WTC11 (cell line): ENCODE measurements at regions of chr21 and their contacts with region 1.

Region 1: DNA sequence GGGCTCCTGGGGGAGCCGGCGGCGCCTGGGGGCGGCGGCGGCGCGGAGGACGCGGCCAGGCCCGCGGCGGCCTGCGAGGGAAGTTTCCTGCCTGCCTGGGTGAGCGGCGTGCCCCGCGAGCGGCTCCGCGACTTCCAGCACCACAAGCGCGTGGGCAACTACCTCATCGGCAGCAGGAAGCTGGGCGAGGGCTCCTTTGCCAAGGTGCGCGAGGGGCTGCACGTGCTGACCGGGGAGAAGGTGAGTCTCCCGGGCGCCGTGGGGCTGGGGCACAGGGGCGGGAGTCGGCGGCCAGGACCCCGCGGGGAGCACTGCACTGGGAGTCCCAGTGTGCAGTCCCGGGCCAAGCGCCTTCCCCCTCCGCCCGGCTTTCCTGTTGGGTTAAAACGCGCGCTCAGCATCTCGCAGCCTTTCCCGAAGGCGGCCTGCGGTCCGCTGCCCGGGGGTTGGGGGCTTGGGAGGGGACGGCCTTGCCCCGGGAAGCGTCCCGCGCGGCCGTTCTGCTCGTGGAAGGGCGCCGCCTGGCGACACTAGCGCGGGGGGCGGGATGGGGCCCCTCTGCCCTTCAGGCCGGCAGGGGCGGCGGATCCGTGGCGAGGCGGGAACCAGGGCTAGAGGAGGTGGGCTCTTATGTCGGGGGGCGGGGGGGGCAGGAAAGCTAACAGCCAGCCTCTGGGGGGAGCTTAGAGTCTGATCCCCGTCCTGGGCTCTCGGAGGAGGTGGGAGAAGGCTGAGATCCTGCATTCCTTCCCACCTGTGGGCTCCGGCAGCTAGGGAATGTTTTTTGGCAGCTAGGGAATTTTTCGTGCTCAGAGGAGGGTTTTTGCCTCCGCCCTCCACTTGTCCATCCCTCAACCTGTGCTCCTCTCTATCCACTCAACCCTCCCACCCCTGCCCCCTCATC is 1.1 kb downstream of the HUNK start:
- DNase-seq: peak; percentile 74
- ATAC-seq: peak; percentile 18
- H3K4me3 Mint-ChIP-seq: peak overlapping the region; percentile 63
- H3K27ac Mint-ChIP-seq: no peak overlapping the region
- H3K4me1 Mint-ChIP-seq: peaks cover 44% of the 10 kb centered on the region
- H3K27me3 Mint-ChIP-seq: peaks cover 43% of the 10 kb centered on the region
- CTCF ChIP-seq: peak; percentile 65

Region 2: DNA sequence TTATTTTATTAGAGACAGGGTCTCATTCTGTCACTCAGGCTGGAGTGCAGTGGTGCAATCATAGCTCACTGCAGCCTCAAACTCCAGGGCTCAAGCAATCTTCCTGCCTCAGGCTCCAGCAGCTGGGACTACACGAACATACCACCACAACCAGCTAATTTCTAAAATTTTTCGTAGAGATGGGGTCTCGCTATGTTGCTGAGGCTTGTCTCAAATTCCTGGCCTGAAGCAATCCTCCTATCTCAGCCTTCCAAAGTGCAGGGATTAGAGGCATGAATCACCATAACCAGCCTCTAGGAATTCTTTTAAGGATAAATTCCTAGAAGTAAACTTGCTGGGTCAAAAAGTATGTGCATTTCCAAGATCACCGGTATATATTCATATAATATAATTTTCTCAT is 18.8 kb before region 1 on chr21:
- CTCF ChIA-PET with region 1: no interaction called
- POLR2A ChIA-PET with region 1: no interaction called
- DNase-seq: no peak
- ATAC-seq: no peak
- H3K4me3 Mint-ChIP-seq: no peak overlapping the region
- H3K27ac Mint-ChIP-seq: no peak overlapping the region
- H3K4me1 Mint-ChIP-seq: no peaks in the 10 kb centered on the region
- H3K27me3 Mint-ChIP-seq: no peaks in the 10 kb centered on the region
- CTCF ChIP-seq: no peak

Region 3: GRCh38 chr21:31888936-31889371 is 15.0 kb after region 1 on chr21:
- CTCF ChIA-PET with region 1: interaction called, 15 read pairs
- POLR2A ChIA-PET with region 1: interaction called, 11 read pairs
- DNase-seq: no peak
- ATAC-seq: peak; percentile 79
- H3K4me3 Mint-ChIP-seq: peak overlapping the region; percentile 50
- H3K27ac Mint-ChIP-seq: peak overlapping the region; percentile 88
- H3K4me1 Mint-ChIP-seq: peaks cover 34% of the 10 kb centered on the region
- H3K27me3 Mint-ChIP-seq: no peaks in the 10 kb centered on the region
- CTCF ChIP-seq: no peak

Region 4: GRCh38 chr21:32257962-32258785 is 384.2 kb after region 1 on chr21:
- CTCF ChIA-PET with region 1: interaction called, 14 read pairs
- POLR2A ChIA-PET with region 1: no interaction called
- DNase-seq: peak; percentile 73
- ATAC-seq: peak; percentile 91
- H3K4me3 Mint-ChIP-seq: no peak overlapping the region
- H3K27ac Mint-ChIP-seq: no peak overlapping the region
- H3K4me1 Mint-ChIP-seq: peaks cover 5% of the 10 kb centered on the region
- H3K27me3 Mint-ChIP-seq: no peaks in the 10 kb centered on the region
- CTCF ChIP-seq: peak; percentile 66